ENCODE measurements at regions of chr6 and their contacts with region 1.

Region 1: DNA sequence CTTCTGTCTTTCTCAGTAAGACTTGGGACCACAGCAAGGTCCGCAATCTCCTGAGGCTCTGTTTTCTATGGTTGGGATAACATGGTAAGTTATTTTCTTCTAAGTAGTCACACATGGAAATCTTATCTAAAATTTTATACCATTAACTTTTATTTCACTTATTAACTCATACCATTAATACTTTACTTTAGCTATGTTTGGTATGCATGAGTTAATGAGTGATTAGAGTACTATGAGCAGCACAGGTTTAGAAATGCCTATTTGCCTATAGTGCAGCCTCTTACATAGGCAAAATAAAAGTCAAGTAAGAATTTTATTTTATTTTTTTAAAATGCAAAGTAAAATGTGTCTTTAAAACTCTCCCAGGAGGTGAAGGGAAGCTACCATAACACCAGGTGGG is 27.3 kb downstream of the GINM1 start:
- DNase-seq: no peak
- ATAC-seq: no peak
- H3K4me3 ChIP-seq: no peak overlapping the region
- H3K27ac ChIP-seq: no peak overlapping the region
- H3K4me1 ChIP-seq: no peaks in the 10 kb centered on the region
- H3K27me3 ChIP-seq: no peaks in the 10 kb centered on the region
- CTCF ChIP-seq: no peak
- EP300 ChIP-seq: no peak
- POLR2A ChIP-seq: no peak
- RAD21 ChIP-seq: no peak

Region 2: GRCh38 chr6:149405823-149406765 is 187.3 kb before region 1 on chr6:
- CTCF ChIA-PET with region 1: no interaction called
- POLR2A ChIA-PET with region 1: no interaction called
- RAD21 ChIA-PET with region 1: no interaction called
- SMC1A ChIA-PET with region 1: no interaction called
- in situ Hi-C with region 1: no loop called
- intact Hi-C with region 1: no loop called
- DNase-seq: no peak
- ATAC-seq: no peak
- H3K4me3 ChIP-seq: no peak overlapping the region
- H3K27ac ChIP-seq: no peak overlapping the region
- H3K4me1 ChIP-seq: no peaks in the 10 kb centered on the region
- H3K27me3 ChIP-seq: no peaks in the 10 kb centered on the region
- CTCF ChIP-seq: no peak
- EP300 ChIP-seq: no peak
- POLR2A ChIP-seq: no peak
- RAD21 ChIP-seq: no peak

Region 3: GRCh38 chr6:149608381-149608982 is 15.0 kb after region 1 on chr6:
- CTCF ChIA-PET with region 1: interaction called, 3 read pairs
- POLR2A ChIA-PET with region 1: no interaction called
- RAD21 ChIA-PET with region 1: no interaction called
- SMC1A ChIA-PET with region 1: interaction called, 12 read pairs
- in situ Hi-C with region 1: no loop called
- intact Hi-C with region 1: no loop called
- DNase-seq: no peak
- ATAC-seq: peak; percentile 62
- H3K4me3 ChIP-seq: no peak overlapping the region
- H3K27ac ChIP-seq: no peak overlapping the region
- H3K4me1 ChIP-seq: no peaks in the 10 kb centered on the region
- H3K27me3 ChIP-seq: no peaks in the 10 kb centered on the region
- CTCF ChIP-seq: no peak
- EP300 ChIP-seq: no peak
- POLR2A ChIP-seq: no peak
- RAD21 ChIP-seq: no peak

Measured in GM12878 (cell line).